Activated CD8-positive, alpha-beta T cell treated with anti-CD3 and anti-CD28 coated beads for 36 hours (primary cell): ENCODE measurements at regions of chr15 and their contacts with region 1.

Region 1: DNA sequence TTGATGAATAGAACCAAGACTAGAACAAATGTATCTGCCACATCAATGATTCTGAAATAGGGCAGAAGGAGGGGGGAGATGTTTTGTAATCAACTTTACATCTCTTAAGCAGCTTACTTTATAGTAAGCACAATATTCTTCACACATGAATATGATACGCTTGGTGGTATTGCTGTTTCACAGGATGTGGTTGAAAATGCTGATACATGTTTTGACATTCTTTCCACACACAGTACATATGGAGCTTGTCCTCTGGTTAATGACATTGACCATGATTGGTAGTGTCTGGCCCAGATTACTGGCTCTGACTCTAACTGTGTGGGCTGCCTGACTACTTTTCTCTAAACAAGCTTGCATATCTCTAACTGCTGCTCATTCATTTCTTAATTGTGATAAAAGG is 168.9 kb downstream of the KLHL25 start:
- DNase-seq: peak; percentile 64
- ATAC-seq: peak; percentile 90
- H3K4me3 Mint-ChIP-seq: peak overlapping the region; percentile 16
- H3K27ac Mint-ChIP-seq: peak overlapping the region; percentile 85
- H3K4me1 Mint-ChIP-seq: peaks cover 7% of the 10 kb centered on the region
- H3K27me3 Mint-ChIP-seq: no peaks in the 10 kb centered on the region
- CTCF ChIP-seq: no peak

Region 2: DNA sequence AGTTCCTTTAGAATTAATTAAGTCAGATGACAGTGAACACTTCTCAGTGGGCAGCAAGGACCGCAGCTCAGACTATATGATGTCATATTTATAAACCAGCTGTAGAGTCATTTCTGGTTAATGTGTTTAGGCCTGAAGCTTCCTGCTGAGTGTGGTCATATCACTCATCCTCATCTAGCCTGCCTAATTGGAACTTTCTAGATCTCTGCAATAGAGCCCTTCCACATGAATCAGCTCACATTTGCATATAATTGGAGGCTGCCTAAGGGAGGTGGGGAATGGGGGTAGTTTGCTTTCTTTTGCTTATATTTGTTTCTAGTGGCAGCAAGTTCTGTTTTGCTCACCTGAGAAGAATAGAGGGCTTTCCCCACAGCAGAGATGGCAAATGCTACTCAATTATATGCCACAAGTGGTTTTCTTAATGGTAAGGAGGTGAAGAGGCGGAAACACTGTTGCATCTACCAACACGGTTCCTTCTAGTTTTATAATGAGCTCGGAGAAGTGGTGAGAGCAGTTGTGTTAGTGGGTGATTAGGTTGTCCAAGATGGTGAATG is 20.8 kb after region 1 on chr15:
- CTCF ChIA-PET with region 1: interaction called, 3 read pairs
- POLR2A ChIA-PET with region 1: interaction called, 4 read pairs
- intact Hi-C with region 1: loop called (anchors 1 kb)
- DNase-seq: peak; percentile 60
- ATAC-seq: peak; percentile 77
- H3K4me3 Mint-ChIP-seq: peak overlapping the region; percentile 26
- H3K27ac Mint-ChIP-seq: peak overlapping the region; percentile 81
- H3K4me1 Mint-ChIP-seq: peaks cover 49% of the 10 kb centered on the region
- H3K27me3 Mint-ChIP-seq: no peaks in the 10 kb centered on the region
- CTCF ChIP-seq: no peak

Region 3: GRCh38 chr15:85667491-85668424 is 41.9 kb after region 1 on chr15:
- CTCF ChIA-PET with region 1: interaction called, 3 read pairs
- POLR2A ChIA-PET with region 1: interaction called, 3 read pairs
- intact Hi-C with region 1: loop called (anchors 1 kb)
- DNase-seq: peak; percentile 79
- ATAC-seq: peak; percentile 95
- H3K4me3 Mint-ChIP-seq: peak overlapping the region; percentile 36
- H3K27ac Mint-ChIP-seq: peak overlapping the region; percentile 96
- H3K4me1 Mint-ChIP-seq: peaks cover 32% of the 10 kb centered on the region
- H3K27me3 Mint-ChIP-seq: no peaks in the 10 kb centered on the region
- CTCF ChIP-seq: no peak